Caco-2 (cell line): ENCODE measurements at regions of chr17 and their contacts with region 1.

Region 1: DNA sequence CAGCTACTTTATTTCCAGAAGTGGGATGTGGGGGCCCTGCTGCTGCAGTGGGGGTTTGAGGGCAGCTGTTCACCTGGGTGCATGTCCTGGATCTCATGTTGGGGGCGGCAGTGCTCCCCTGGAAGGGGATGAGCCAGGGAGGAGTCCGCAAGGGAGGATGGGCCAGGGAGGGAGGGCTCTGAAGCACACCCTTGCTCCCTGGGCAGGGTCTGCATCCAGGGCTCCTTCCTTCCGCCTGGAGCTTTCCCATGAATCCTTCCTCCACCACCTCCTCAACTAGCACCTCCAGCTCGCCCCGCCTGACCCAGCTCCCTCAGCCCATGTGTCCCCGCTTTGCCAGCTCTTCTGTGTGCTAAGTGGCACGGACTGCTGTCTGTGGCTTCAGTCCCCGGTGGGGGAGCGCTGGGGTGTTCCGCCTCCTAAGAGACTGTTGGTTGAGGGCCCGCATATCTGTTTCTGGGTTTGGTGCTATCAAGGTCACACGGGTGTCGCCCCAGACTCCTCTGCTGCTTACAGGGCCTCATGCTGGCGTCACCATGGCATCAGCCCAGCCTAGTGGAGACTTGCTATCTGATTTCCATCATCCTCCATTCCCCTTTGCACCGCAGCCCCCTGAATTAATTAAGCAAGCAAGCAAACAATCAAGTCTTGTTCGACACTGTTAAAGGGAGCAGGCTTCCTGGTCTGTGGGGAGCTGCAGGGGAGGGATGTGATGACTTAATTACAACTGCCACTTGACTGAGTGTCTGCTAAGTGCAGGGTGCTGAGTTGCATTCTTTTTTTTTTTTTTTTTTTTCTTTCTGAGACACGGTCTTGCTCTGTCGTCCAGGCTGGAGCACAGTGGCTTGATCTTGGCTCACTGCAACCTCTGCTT is 71.8 kb downstream of the PRKCA start:
- DNase-seq: no peak
- H3K4me3 ChIP-seq: no peak overlapping the region
- H3K4me3 Mint-ChIP-seq: no peak overlapping the region
- H3K27ac Mint-ChIP-seq: no peak overlapping the region
- H3K4me1 ChIP-seq: peaks cover 34% of the 10 kb centered on the region
- H3K4me1 Mint-ChIP-seq: peaks cover 20% of the 10 kb centered on the region
- H3K27me3 ChIP-seq: no peaks in the 10 kb centered on the region
- H3K27me3 Mint-ChIP-seq: no peaks in the 10 kb centered on the region
- CTCF ChIP-seq: no peak

Region 2: GRCh38 chr17:66040402-66040801 is 333.8 kb before region 1 on chr17:
- CTCF ChIA-PET with region 1: interaction called, 10 read pairs
- POLR2A ChIA-PET with region 1: no interaction called
- intact Hi-C with region 1: no loop called
- DNase-seq: peak in 1 of 2 experiments; percentile 7
- H3K4me3 ChIP-seq: no peak overlapping the region
- H3K4me3 Mint-ChIP-seq: no peak overlapping the region
- H3K27ac Mint-ChIP-seq: no peak overlapping the region
- H3K4me1 ChIP-seq: no peaks in the 10 kb centered on the region
- H3K4me1 Mint-ChIP-seq: no peaks in the 10 kb centered on the region
- H3K27me3 ChIP-seq: no peaks in the 10 kb centered on the region
- H3K27me3 Mint-ChIP-seq: peaks cover 9% of the 10 kb centered on the region
- CTCF ChIP-seq: peak in 1 of 2 experiments; percentile 17

Region 3: DNA sequence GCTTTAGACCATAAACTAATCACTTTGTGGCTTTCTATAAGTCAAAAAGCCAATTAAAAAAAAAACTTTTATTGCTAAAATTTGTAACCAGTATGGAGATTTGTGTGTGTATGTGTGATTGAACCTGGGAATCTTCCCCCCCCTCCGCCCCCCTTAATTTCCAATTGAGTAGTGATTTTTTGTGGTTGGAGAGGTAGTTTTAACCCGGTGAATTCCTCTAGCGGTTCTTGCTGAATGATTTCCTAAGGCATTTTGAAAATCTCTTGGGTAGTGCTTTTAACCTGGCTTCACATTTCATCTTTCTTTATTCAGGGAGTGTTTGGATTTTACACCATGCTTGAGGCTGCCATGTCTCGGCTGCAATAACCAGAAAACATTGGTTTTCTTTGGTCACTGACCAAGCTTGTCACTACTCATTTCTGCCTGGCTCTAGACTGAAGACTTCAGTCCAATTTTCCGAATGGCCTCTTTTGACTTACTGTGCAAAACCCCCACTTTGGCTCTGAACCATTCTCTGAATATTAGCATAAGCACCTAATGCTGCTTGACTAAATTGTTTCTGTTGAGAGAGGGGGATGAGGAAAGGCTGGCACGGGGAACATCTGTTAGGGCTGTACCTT is 36.2 kb before region 1 on chr17:
- CTCF ChIA-PET with region 1: no interaction called
- POLR2A ChIA-PET with region 1: no interaction called
- intact Hi-C with region 1: no loop called
- DNase-seq: no peak
- H3K4me3 ChIP-seq: no peak overlapping the region
- H3K4me3 Mint-ChIP-seq: no peak overlapping the region
- H3K27ac Mint-ChIP-seq: no peak overlapping the region
- H3K4me1 ChIP-seq: peaks cover 31% of the 10 kb centered on the region
- H3K4me1 Mint-ChIP-seq: peaks cover 16% of the 10 kb centered on the region
- H3K27me3 ChIP-seq: no peaks in the 10 kb centered on the region
- H3K27me3 Mint-ChIP-seq: no peaks in the 10 kb centered on the region
- CTCF ChIP-seq: no peak

Region 4: GRCh38 chr17:66348584-66349165 is 25.5 kb before region 1 on chr17:
- CTCF ChIA-PET with region 1: no interaction called
- POLR2A ChIA-PET with region 1: no interaction called
- intact Hi-C with region 1: no loop called
- DNase-seq: peak; percentile 63 to 69
- H3K4me3 ChIP-seq: no peak overlapping the region
- H3K4me3 Mint-ChIP-seq: peak overlapping the region; percentile 57
- H3K27ac Mint-ChIP-seq: peak overlapping the region; percentile 54
- H3K4me1 ChIP-seq: peaks cover 64% of the 10 kb centered on the region
- H3K4me1 Mint-ChIP-seq: peaks cover 30% of the 10 kb centered on the region
- H3K27me3 ChIP-seq: no peaks in the 10 kb centered on the region
- H3K27me3 Mint-ChIP-seq: no peaks in the 10 kb centered on the region
- CTCF ChIP-seq: no peak